CD8-positive, alpha-beta T cell (primary cell): ENCODE measurements at regions of chr11 and their contacts with region 1.

Region 1: DNA sequence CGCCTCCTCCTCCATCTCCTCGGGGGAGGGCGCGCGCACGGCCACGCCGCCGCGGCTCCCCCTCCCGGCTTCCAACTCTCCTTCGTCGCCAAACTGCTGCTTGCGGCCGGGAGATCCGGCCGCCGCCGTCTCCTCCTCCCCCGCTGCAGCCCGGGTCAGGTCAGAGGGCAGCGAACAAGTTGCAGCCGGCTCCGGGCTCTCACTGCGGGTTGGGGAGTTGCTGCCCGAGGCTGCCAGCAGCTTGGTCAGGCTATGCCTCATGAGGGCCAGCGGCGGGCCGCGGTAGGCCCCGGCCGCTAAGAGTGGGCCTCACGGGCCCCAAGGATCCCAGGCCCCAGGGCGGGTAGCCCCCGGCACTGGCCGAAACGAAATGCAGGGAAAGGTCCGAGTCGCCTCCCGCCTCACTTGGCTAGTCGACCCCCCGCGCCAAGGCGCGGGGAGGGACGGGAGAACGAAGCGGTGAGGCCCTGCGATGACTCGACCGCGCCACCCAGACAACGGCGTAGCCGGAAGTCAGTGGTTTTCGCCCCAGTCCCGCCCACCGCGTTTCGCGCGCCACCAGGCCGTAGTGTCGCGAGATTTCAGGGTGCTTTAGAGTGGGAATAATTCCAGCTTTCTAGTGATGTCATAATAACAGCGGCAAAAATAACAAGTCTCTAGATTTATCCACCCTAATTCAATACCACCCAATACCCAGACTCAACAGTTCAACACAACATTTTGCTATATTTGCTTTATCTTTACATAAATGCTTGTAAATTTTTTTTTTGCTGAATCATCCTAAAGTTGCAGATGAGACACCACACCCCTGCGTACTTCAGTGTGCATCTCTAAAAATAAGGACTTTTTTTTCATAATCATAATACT is at the start of gene CREBZF:
- DNase-seq: peak; percentile 84 to 96 (median 94)
- ATAC-seq: peak; percentile 61
- H3K4me3 ChIP-seq: peak within 1 kb of the TSS; percentile 78 to 94
- H3K4me3 Mint-ChIP-seq: peak within 1 kb of the TSS; percentile 100
- H3K27ac ChIP-seq: peak within 1 kb of the TSS; percentile 96 to 97
- H3K27ac Mint-ChIP-seq: peak within 1 kb of the TSS; percentile 100
- H3K4me1 ChIP-seq: peaks cover 38% of the 10 kb centered on the region
- H3K4me1 Mint-ChIP-seq: peaks cover 43% of the 10 kb centered on the region
- H3K27me3 ChIP-seq: no peaks in the 10 kb centered on the region
- H3K27me3 Mint-ChIP-seq: no peaks in the 10 kb centered on the region
- CTCF ChIP-seq: no peak
- total RNA-seq, gene CREBZF: 32.2 to 33.3 TPM

Region 2: DNA sequence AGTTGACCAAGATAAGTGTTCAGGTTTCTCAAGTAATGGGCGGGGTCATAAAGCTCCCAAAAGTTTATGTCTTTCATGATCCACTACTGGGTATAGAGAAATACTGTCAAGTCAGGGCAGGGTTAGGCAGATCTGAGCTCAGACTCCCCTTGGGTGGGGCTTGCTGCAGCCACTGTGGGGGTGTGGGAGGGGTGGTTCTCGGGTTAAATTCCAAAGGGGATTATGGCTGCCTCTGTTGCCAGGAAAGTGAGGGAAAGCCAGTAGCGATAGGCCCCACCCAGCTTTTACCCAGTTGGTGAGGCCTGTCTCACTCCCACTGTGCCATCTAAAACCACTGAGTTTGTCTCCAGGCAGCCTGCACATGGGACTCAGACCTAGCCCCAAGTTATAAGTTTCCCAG is 75.5 kb before region 1 on chr11:
- CTCF ChIA-PET with region 1: no interaction called
- POLR2A ChIA-PET with region 1: no interaction called
- intact Hi-C with region 1: no loop called
- DNase-seq: no peak
- ATAC-seq: no peak
- H3K4me3 ChIP-seq: no peak overlapping the region
- H3K4me3 Mint-ChIP-seq: no peak overlapping the region
- H3K27ac ChIP-seq: no peak overlapping the region
- H3K27ac Mint-ChIP-seq: no peak overlapping the region
- H3K4me1 ChIP-seq: no peaks in the 10 kb centered on the region
- H3K4me1 Mint-ChIP-seq: no peaks in the 10 kb centered on the region
- H3K27me3 ChIP-seq: no peaks in the 10 kb centered on the region
- H3K27me3 Mint-ChIP-seq: peaks cover 14% of the 10 kb centered on the region
- CTCF ChIP-seq: no peak

Region 3: GRCh38 chr11:85647604-85648299 is 17.1 kb before region 1 on chr11 and contains the start of gene TMEM126A:
- CTCF ChIA-PET with region 1: interaction called, 19 read pairs
- POLR2A ChIA-PET with region 1: interaction called, 49 read pairs
- intact Hi-C with region 1: loop called (anchors 1 kb)
- DNase-seq: peak; percentile 77 to 94 (median 90)
- ATAC-seq: peak; percentile 98
- H3K4me3 ChIP-seq: peak within 1 kb of the TSS; percentile 82 to 92
- H3K4me3 Mint-ChIP-seq: peak within 1 kb of the TSS; percentile 92
- H3K27ac ChIP-seq: peak within 1 kb of the TSS; percentile 75 to 90
- H3K27ac Mint-ChIP-seq: peak within 1 kb of the TSS; percentile 96
- H3K4me1 ChIP-seq: peaks cover 18% of the 10 kb centered on the region
- H3K4me1 Mint-ChIP-seq: peaks cover 39% of the 10 kb centered on the region
- H3K27me3 ChIP-seq: no peaks in the 10 kb centered on the region
- H3K27me3 Mint-ChIP-seq: peaks cover 17% of the 10 kb centered on the region
- CTCF ChIP-seq: no peak
- total RNA-seq, gene TMEM126A: 23.3 to 26.8 TPM

Region 4: DNA sequence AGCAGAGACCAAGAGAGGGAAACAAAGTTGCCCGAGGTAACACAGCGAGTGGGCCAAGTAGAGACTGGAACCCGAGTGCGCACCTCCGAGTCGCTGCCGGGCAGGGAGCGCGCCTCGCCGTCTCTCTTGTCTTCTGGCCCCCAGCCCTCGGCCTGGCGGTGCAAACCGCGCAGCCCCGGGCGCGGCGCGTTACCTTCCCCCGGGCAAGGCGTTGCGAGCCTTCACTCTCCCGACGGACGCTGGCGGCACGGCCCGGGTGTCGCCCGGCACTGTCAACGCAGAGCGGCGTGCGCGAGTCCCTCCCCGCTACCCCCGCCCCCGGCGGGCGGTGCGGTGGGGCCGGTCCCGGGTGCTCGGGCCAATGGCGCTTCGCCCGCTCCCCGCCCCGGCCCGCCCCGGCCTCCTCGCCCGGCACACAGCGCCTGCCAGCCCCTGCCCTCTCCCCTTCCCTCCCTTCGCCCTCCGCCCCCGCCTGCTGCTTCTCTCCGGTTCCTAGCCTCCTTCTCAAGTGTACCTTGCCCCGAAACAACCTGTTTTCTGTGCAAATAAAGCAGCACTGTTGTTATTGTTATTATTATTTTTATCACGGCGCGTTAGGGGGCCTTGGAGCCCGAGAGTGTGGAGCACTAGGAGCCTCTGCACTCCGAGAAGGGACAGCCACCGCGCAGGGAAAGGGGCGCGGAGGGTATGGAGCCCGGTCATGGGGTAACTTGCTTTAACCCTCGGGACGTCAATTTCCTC is 146.2 kb after region 1 on chr11 and contains the start of gene SYTL2:
- CTCF ChIA-PET with region 1: no interaction called
- POLR2A ChIA-PET with region 1: interaction called, 4 read pairs
- intact Hi-C with region 1: loop called in 1 of 2 experiments (anchors 1 kb)
- DNase-seq: peak; percentile 53 to 89 (median 74)
- ATAC-seq: peak; percentile 78
- H3K4me3 ChIP-seq: peak within 1 kb of the TSS; percentile 68 to 85
- H3K4me3 Mint-ChIP-seq: peak within 1 kb of the TSS; percentile 93
- H3K27ac ChIP-seq: peak within 1 kb of the TSS; percentile 50 to 56
- H3K27ac Mint-ChIP-seq: peak within 1 kb of the TSS; percentile 93
- H3K4me1 ChIP-seq: peaks cover 19% of the 10 kb centered on the region
- H3K4me1 Mint-ChIP-seq: peaks cover 48% of the 10 kb centered on the region
- H3K27me3 ChIP-seq: no peaks in the 10 kb centered on the region
- H3K27me3 Mint-ChIP-seq: peaks cover 2% of the 10 kb centered on the region
- CTCF ChIP-seq: no peak
- total RNA-seq, gene SYTL2: 37.2 to 43.6 TPM

Region 5: GRCh38 chr11:86193297-86194095 is 528.6 kb after region 1 on chr11:
- CTCF ChIA-PET with region 1: no interaction called
- POLR2A ChIA-PET with region 1: no interaction called
- intact Hi-C with region 1: no loop called
- DNase-seq: peak; percentile 26 to 86 (median 59)
- ATAC-seq: peak; percentile 100
- H3K4me3 ChIP-seq: peak overlapping the region; percentile 37 to 54
- H3K4me3 Mint-ChIP-seq: peak overlapping the region; percentile 83
- H3K27ac ChIP-seq: peak overlapping the region in 1 of 2 experiments; percentile 60
- H3K27ac Mint-ChIP-seq: peak overlapping the region; percentile 73
- H3K4me1 ChIP-seq: peaks cover 6% of the 10 kb centered on the region
- H3K4me1 Mint-ChIP-seq: peaks cover 15% of the 10 kb centered on the region
- H3K27me3 ChIP-seq: no peaks in the 10 kb centered on the region
- H3K27me3 Mint-ChIP-seq: no peaks in the 10 kb centered on the region
- CTCF ChIP-seq: peak; percentile 80

Region 6: DNA sequence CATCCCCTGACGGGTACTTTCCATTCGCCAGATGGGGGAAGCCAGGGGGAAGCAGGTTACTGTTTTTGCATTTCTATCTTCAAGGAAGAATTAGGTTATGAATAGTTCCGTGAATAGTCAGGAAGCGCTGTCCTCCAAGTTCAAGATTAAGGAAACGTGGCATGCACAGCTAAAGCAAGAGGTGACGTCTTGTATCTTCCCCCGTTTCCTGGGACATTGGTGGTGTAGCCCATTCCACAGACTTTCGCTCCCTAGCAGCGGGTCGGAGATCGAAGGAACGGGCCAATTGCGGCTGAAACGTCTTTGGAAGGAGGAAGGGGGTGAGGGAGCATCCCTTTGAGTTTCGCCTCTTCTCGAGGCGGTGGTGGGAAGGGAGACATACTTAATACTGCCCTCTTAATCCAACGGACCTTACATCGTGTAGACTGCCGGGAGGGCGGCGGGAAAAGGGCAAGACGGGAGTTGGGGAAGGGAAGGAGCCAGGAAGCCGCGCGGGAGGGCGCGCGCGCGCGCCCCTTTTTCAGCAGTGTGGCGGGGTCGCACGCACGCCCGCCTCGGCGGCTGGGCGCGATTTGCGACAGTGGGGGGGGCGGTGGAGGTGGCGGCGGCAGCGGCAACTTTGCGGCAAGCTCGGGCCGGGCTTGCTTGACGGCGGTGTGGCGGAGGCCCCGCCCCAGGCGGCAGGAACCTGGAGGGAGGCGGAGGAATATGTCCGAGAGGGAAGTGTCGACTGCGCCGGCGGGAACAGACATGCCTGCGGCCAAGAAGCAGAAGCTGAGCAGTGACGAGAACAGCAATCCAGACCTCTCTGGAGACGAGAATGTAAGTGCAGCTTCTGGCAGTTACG is 579.9 kb after region 1 on chr11 and contains the start of gene EED:
- CTCF ChIA-PET with region 1: no interaction called
- POLR2A ChIA-PET with region 1: no interaction called
- intact Hi-C with region 1: loop called (anchors 1 kb)
- DNase-seq: peak; percentile 88 to 97 (median 94)
- ATAC-seq: peak; percentile 85
- H3K4me3 ChIP-seq: peak within 1 kb of the TSS; percentile 100
- H3K4me3 Mint-ChIP-seq: no peak within 1 kb of the TSS
- H3K27ac ChIP-seq: peak within 1 kb of the TSS; percentile 97 to 99
- H3K27ac Mint-ChIP-seq: no peak within 1 kb of the TSS
- H3K4me1 ChIP-seq: peaks cover 25% of the 10 kb centered on the region
- H3K4me1 Mint-ChIP-seq: peaks cover 27% of the 10 kb centered on the region
- H3K27me3 ChIP-seq: no peaks in the 10 kb centered on the region
- H3K27me3 Mint-ChIP-seq: no peaks in the 10 kb centered on the region
- CTCF ChIP-seq: no peak
- total RNA-seq, gene EED: 23.5 to 24.7 TPM